GM10248 (cell line): ENCODE measurements at regions of chr6 and their contacts with region 1.

Region 1: DNA sequence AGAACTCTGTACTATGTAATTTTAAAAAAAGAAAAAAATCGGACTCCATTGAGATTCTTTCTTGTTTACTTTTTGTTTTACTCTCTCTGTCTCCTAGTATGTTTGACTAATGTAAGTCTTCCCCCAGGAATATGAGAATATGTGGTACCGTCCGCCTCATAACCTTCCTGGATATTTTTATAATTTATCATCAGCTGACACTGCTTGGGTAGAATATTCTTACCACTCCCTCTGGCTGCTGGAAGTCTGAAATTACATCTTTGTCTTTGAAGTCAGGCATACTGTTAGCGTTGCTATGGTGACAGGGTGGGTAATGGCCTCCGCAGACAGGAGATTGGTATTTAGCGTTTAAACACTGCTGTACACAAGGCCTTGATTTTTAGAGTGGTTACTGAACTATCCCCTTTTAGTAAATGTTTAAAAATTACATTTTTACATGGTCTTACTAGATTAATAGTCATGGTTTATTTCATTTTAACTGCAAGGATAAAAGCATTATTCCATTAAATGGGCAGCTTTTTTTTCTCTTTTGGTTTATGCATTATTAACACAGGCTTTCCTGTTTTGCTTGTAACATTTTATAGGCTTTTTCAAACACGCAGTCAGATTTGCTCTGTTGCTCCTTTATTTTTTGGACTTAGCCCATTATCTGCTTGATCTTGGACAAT is 176.4 kb downstream of the ARID1B start:
- DNase-seq: peak; percentile 41
- CTCF ChIP-seq: no peak

Region 2: GRCh38 chr6:156942266-156942665 is 11.3 kb before region 1 on chr6:
- CTCF ChIA-PET with region 1: interaction called, 32 read pairs
- POLR2A ChIA-PET with region 1: no interaction called
- DNase-seq: no peak
- CTCF ChIP-seq: peak; percentile 23

Region 3: DNA sequence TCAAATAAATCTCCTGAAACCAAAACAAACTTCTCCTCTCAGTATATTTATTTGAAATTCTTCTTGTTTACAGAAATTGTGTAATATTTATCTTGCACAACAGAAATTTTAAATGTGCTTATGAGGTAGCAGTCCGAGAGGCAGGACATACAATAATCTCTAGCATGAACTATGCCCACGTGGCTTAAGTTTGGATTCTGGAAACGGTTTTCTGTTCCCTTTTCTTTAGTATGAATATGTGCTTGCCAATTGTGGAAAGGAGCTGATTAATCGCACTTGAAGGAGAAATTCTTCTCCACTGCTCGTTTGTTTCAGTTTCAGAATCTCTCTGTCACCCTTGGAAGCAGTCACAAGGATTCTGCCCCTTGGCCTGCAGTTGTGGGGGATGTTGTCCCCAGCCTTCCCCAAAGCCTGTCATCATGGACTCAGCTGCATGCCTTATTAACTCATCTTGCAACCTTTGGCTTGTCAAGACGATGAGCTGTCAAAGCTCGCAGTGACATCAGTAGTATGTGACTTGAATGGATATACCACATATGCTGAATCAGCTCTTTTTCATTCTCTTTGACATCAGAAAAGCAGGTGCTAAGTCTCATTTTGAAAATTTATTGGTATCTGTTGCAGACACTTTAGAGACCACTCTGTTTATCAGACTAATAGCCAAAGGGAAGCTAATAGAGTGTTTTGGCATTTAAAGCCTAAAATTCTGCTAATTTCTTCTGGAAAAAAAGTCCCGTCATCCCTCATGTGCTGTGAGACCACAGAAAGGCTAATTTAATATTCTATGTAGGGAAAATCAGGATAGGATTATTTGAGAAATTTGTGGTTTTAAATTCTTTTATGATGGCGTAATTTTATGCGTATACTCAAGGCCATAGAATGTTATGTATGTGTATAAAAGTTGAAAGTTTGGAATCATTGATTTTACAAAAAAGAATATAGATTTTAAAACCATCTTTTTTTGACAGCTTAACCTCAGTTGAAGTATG is 10.4 kb after region 1 on chr6:
- CTCF ChIA-PET with region 1: interaction called, 21 read pairs
- POLR2A ChIA-PET with region 1: no interaction called
- DNase-seq: no peak
- CTCF ChIP-seq: no peak